ENCODE measurements at regions of chr1 and their contacts with region 1.

Region 1: GRCh38 chr1:51519048-51519864 is at the start of gene EPS15:
- DNase-seq: peak; percentile 92
- H3K4me3 Mint-ChIP-seq: peak within 1 kb of the TSS; percentile 85
- H3K27ac Mint-ChIP-seq: peak within 1 kb of the TSS; percentile 86
- H3K4me1 Mint-ChIP-seq: peaks cover 53% of the 10 kb centered on the region
- H3K27me3 Mint-ChIP-seq: no peaks in the 10 kb centered on the region
- total RNA-seq, gene EPS15: 69.5 to 69.6 TPM

Region 2: GRCh38 chr1:50968158-50968820 is 551.0 kb before region 1 on chr1:
- CTCF ChIA-PET with region 1: no interaction called
- POLR2A ChIA-PET with region 1: no interaction called
- intact Hi-C with region 1: loop called (anchors 2 kb)
- DNase-seq: peak; percentile 86
- H3K4me3 Mint-ChIP-seq: peak overlapping the region; percentile 88
- H3K27ac Mint-ChIP-seq: peak overlapping the region; percentile 97
- H3K4me1 Mint-ChIP-seq: peaks cover 26% of the 10 kb centered on the region
- H3K27me3 Mint-ChIP-seq: peaks cover 12% of the 10 kb centered on the region

Region 3: DNA sequence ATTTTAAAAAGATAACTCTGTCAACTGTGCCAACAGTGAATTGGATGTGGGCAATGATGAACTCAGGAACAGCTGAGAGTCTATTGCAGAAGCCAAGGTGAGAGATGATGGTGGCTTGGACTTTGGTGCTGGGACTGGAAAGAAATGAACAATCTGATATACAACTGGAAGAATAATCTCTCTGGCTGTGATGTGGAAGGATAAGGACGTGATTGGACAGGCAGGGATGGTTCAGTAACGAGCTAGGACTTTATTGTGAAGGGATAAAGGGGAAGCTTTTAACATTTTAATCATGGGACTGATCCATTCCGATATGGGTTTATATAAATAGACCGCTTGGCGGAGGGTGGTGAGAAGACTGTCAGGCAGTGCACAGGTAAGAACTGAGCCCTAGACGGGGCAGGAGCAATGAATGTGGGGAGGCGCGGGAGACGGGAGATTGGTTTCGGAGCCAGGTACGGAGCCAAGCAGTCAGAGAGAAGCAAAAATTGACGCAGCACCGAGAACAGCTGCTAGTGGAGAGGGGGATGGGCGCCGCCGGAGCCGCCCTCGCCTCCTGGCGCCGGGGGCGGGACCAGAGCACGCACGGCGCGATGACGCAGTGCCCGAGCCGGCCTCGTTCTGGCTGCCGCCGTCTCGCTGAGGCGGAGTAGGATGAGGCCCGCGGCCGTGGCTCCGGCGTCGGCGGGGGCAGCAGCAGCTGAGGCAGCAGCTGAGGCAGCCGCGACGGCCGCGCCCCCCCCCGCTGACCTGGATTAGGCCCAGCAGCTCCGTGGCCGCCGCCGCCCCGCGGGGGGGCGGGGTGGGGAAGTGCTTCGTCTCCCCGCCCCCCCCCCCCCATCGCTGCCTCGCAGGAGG is 283.4 kb before region 1 on chr1 and contains the start of gene RNF11:
- CTCF ChIA-PET with region 1: no interaction called
- POLR2A ChIA-PET with region 1: no interaction called
- intact Hi-C with region 1: loop called (anchors 5 kb)
- DNase-seq: peak; percentile 94
- H3K4me3 Mint-ChIP-seq: peak within 1 kb of the TSS; percentile 89
- H3K27ac Mint-ChIP-seq: peak within 1 kb of the TSS; percentile 81
- H3K4me1 Mint-ChIP-seq: peaks cover 38% of the 10 kb centered on the region
- H3K27me3 Mint-ChIP-seq: no peaks in the 10 kb centered on the region
- total RNA-seq, gene RNF11: 26.3 to 31.9 TPM

Region 4: DNA sequence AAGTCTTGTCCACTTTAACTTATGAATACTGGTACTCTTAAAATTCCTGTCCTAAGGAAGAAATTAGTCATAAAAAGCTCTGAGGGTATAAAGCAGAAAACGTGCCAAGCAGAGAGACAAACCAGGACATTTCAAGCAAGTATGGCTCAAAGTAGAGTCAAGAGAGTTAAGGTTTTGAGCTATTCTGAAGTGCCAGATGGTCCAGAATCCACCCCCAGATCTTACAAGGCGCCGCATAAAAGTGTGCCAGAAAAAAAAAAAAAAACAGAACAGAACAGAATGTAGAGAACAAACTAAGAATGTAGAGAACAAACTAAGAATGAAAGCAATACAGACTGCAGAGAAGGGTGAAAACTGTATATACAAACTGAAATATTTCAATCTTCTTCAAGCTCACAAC is 12.7 kb before region 1 on chr1:
- CTCF ChIA-PET with region 1: interaction called, 4 read pairs
- POLR2A ChIA-PET with region 1: interaction called, 25 read pairs
- intact Hi-C with region 1: loop called (anchors 1 kb)
- DNase-seq: peak; percentile 35
- H3K4me3 Mint-ChIP-seq: no peak overlapping the region
- H3K27ac Mint-ChIP-seq: peak overlapping the region; percentile 53
- H3K4me1 Mint-ChIP-seq: peaks cover 61% of the 10 kb centered on the region
- H3K27me3 Mint-ChIP-seq: no peaks in the 10 kb centered on the region

Region 5: GRCh38 chr1:51535006-51535592 is 15.8 kb after region 1 on chr1:
- CTCF ChIA-PET with region 1: interaction called, 5 read pairs
- POLR2A ChIA-PET with region 1: interaction called, 3 read pairs
- intact Hi-C with region 1: loop called (anchors 2 kb)
- DNase-seq: peak; percentile 54
- H3K4me3 Mint-ChIP-seq: no peak overlapping the region
- H3K27ac Mint-ChIP-seq: no peak overlapping the region
- H3K4me1 Mint-ChIP-seq: peaks cover 12% of the 10 kb centered on the region
- H3K27me3 Mint-ChIP-seq: no peaks in the 10 kb centered on the region

Region 6: GRCh38 chr1:51616901-51617708 is 97.8 kb after region 1 on chr1 and contains the start of gene OSBPL9:
- CTCF ChIA-PET with region 1: no interaction called
- POLR2A ChIA-PET with region 1: no interaction called
- intact Hi-C with region 1: loop called (anchors 5 kb)
- DNase-seq: peak; percentile 94
- H3K4me3 Mint-ChIP-seq: peak within 1 kb of the TSS; percentile 99
- H3K27ac Mint-ChIP-seq: peak within 1 kb of the TSS; percentile 80
- H3K4me1 Mint-ChIP-seq: peaks cover 32% of the 10 kb centered on the region
- H3K27me3 Mint-ChIP-seq: no peaks in the 10 kb centered on the region
- total RNA-seq, gene OSBPL9: 46.1 to 48.6 TPM

Region 7: GRCh38 chr1:51878616-51879336 is 359.5 kb after region 1 on chr1 and contains the start of gene NRDC:
- CTCF ChIA-PET with region 1: no interaction called
- POLR2A ChIA-PET with region 1: no interaction called
- intact Hi-C with region 1: loop called (anchors 5 kb)
- DNase-seq: peak; percentile 100
- H3K4me3 Mint-ChIP-seq: no peak within 1 kb of the TSS
- H3K27ac Mint-ChIP-seq: no peak within 1 kb of the TSS
- H3K4me1 Mint-ChIP-seq: peaks cover 33% of the 10 kb centered on the region
- H3K27me3 Mint-ChIP-seq: peaks cover 6% of the 10 kb centered on the region
- total RNA-seq, gene NRDC: 153 to 155 TPM

Region 8: DNA sequence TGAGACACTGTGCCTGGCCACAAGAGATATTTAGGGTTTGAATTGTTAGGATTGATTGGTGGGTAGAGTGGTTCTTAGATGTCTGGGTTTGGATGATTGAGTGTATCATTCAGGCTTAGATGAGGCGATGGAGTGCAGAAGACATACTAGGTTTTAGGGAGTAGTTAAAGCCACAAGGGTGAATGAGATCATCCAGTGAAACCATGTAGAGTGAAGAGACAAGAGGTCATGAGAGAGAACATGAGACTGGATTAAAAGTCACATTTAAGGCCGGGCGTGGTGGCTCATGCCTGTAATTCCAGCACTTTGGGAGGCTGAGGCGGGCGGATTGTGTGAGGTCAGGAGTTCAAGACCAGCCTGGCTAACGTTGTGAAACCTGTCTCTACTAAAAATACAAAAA is 659.8 kb after region 1 on chr1:
- CTCF ChIA-PET with region 1: no interaction called
- POLR2A ChIA-PET with region 1: no interaction called
- intact Hi-C with region 1: no loop called
- DNase-seq: no peak
- H3K4me3 Mint-ChIP-seq: no peak overlapping the region
- H3K27ac Mint-ChIP-seq: no peak overlapping the region
- H3K4me1 Mint-ChIP-seq: no peaks in the 10 kb centered on the region
- H3K27me3 Mint-ChIP-seq: no peaks in the 10 kb centered on the region

Measured in activated CD4-positive, alpha-beta memory T cell treated with anti-CD3 and anti-CD28 coated beads for 36 hours (primary cell).